ENCODE measurements at regions of chr7 and their contacts with region 1.

Region 1: DNA sequence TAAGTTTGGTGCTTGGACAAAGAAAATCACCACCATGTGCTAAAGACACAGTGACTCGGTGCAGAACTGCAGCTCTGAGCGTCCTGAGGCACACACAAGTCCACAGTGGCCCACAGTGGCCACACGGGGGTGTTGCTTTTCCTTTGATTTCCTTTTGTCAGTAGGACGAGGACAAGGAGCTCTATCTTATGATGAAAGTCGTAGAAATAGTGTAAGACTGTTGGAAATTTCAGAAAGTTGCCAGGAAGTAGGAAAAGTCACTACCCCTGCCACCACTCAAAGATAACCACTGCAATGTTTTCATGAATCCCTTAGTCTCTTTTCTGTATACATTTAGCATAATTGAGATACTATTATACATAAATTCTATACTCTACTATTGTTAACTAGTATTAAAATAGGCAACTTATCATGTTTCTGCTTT is 146.0 kb downstream of the TNS3 start:
- DNase-seq: no peak
- CTCF ChIP-seq: peak; percentile 38

Region 2: GRCh38 chr7:47818796-47819606 is 383.1 kb after region 1 on chr7:
- in situ Hi-C with region 1: loop called (anchors 25 kb)
- DNase-seq: peak; percentile 71
- CTCF ChIP-seq: peak; percentile 96

Measured in GM13977 (cell line).